HCT116 (cell line): ENCODE measurements at regions of chr9 and their contacts with region 1.

Region 1: DNA sequence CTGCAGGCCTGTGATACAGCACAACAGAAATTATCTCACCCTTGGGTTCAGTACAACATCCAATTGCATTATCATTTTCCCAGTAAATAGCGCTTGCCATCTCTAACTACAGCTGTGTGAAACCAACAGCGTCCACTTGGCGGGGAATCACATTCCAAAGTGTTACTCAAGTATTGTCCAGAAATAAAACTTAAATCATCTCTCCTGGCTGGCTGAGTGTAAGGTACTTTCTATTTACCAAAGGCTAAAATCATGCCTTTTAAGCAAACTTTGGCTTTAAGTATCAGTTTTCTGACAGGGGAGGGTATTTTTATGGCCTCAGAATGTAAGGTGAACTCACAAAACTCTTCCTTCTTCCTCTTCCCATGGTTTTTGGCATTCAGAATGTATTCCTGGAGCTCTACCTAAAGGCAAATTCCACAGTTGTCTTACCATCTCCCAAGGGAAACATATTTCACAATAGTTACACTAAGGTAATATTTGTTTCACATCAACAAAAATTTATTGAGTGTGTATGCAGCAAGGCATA is 205.6 kb upstream of the MPDZ start:
- DNase-seq: no peak
- ATAC-seq: no peak
- H3K4me3 ChIP-seq: no peak overlapping the region
- H3K27ac ChIP-seq: no peak overlapping the region
- H3K4me1 ChIP-seq: no peaks in the 10 kb centered on the region
- H3K27me3 ChIP-seq: no peaks in the 10 kb centered on the region
- CTCF ChIP-seq: no peak
- POLR2A ChIP-seq: no peak
- RAD21 ChIP-seq: no peak

Region 2: GRCh38 chr9:13823026-13823425 is 337.9 kb after region 1 on chr9:
- CTCF ChIA-PET with region 1: no interaction called
- POLR2A ChIA-PET with region 1: no interaction called
- RAD21 ChIA-PET with region 1: no interaction called
- intact Hi-C with region 1: loop called (anchors 10 kb)
- DNase-seq: no peak
- ATAC-seq: no peak
- H3K4me3 ChIP-seq: no peak overlapping the region
- H3K27ac ChIP-seq: no peak overlapping the region
- H3K4me1 ChIP-seq: no peaks in the 10 kb centered on the region
- H3K27me3 ChIP-seq: no peaks in the 10 kb centered on the region
- CTCF ChIP-seq: no peak
- POLR2A ChIP-seq: no peak
- RAD21 ChIP-seq: no peak